Posterior cingulate gyrus (tissue), 11 donors: ENCODE measurements at regions of chr5 and their contacts with region 1.

Region 1: DNA sequence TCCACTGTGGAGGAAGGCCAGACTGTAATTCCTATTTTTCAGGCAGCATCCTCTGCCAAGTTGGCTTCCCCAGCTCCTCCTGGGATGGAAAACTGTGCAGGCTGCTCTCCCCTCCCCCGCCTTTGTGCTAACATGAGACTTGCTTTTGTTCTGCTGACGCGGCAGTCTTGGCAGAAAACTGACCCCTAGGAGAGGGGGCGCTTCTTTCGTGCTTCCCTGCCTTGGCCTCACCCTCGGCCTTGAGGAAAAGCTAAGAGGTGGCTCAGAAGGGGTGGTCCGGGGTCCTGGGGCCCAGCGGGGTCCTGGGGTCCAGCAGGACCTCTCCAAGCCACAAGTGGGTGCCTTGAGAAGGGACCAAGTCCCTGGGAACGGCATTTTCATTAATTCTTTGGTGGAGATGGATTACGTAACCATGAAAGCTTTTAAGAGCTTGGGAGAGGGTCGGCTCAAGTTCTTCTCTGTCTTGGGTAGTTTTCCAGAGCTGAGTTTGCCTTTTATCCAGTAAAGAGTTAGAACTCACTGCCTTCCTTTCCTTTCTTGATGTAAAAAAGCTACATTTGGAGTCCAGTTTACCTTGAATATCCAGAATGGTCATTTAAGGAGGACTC is 51.0 kb downstream of the SH3PXD2B start:
- DNase-seq: peak; percentile 62 to 95 (median 77)

Region 2: DNA sequence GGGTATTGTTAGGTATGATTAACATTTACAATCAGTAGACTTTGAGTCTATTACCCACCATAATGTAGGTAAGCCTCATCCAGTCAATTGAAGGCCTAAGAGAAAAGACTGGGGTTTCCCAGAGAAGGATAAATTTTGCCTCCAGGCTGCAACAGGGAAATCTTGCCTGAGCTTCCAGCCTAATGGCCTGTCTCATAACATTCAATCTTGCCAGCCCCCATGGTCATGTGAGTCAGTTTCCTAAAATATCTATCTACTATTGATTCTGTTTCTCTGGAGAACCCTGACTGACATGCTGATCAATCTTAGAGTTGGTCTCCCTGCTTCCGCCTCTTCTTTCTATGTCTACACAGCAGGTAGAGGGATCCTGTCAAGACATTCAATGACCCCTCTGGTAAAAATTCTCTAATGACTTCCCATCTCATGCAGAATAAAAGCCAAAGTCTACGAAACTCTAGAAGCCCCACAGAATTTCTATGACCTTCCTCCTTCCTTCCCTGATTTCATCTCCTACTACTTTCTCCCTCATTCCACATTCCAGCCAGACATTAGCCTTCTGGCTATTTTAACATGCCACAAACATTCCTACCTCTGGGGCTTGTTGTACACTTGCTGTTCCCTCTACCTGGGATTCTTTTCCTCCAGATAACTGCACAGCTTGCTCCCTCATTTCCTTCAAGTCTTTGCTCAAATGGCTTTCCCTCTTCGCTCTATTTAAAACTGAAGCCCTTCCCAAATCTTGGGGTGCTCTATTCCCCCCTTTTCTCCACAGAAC is 457.1 kb before region 1 on chr5:
- intact Hi-C with region 1: no loop called
- DNase-seq: no peak

Region 3: GRCh38 chr5:172283020-172283861 is 120.1 kb before region 1 on chr5 and contains the start of gene UBTD2:
- intact Hi-C with region 1: no loop called
- DNase-seq: peak; percentile 47 to 95 (median 68)

Region 4: GRCh38 chr5:172417983-172418630 is 14.8 kb after region 1 on chr5:
- intact Hi-C with region 1: loop called (anchors 2 kb)
- DNase-seq: peak; percentile 41 to 95 (median 63)